ENCODE measurements at regions of chr17 and their contacts with region 1.

Region 1: DNA sequence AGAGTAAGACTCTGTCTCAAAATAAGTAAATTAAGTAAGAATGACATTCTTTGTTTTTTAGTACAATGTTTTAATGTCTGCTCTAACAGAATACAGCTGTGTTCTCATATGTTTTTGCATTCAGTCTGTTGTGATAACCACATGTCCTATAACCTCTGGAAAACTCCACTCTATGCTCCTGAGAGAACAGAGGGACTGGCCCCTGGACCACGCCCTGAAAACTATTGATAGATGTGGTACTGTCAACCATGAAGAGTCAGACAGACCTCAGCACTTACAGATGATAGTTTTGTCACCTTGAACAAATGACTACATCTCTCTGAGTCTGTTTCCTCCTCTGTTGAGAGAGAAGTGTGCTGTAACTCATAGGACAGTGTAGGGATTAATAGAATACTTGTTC is 7.9 kb downstream of the SUPT6H start:
- DNase-seq: no peak
- H3K4me3 Mint-ChIP-seq: no peak overlapping the region
- H3K27ac Mint-ChIP-seq: no peak overlapping the region
- H3K4me1 Mint-ChIP-seq: peaks cover 8% of the 10 kb centered on the region
- H3K27me3 Mint-ChIP-seq: no peaks in the 10 kb centered on the region

Region 2: GRCh38 chr17:28552246-28552999 is 117.5 kb before region 1 on chr17 and contains the start of gene UNC119:
- intact Hi-C with region 1: no loop called
- DNase-seq: peak; percentile 70
- H3K4me3 Mint-ChIP-seq: peak within 1 kb of the TSS; percentile 97
- H3K27ac Mint-ChIP-seq: peak within 1 kb of the TSS; percentile 76
- H3K4me1 Mint-ChIP-seq: peaks cover 47% of the 10 kb centered on the region
- H3K27me3 Mint-ChIP-seq: no peaks in the 10 kb centered on the region
- total RNA-seq, gene UNC119: 55.3 and 63.9 TPM in 2 replicates

Region 3: GRCh38 chr17:28623696-28624095 is 46.2 kb before region 1 on chr17:
- intact Hi-C with region 1: loop called (anchors 5 kb)
- DNase-seq: no peak
- H3K4me3 Mint-ChIP-seq: no peak overlapping the region
- H3K27ac Mint-ChIP-seq: no peak overlapping the region
- H3K4me1 Mint-ChIP-seq: peaks cover 4% of the 10 kb centered on the region
- H3K27me3 Mint-ChIP-seq: no peaks in the 10 kb centered on the region

Measured in activated T-helper 2 cell treated with anti-CD3 and anti-CD28 coated beads, Interferon-gamma antibody, Interleukin-2, Interleukin-4, amounts not matched to agents 10 μg/mL and 5 μg/mL and 100 μg/mL, durations not matched to agents 14 hours and 24 hours and 36 hours (primary cell).